GM18951 (cell line): ENCODE measurements at regions of chr1 and their contacts with region 1.

Region 1: GRCh38 chr1:113042285-113043143 is 30.5 kb upstream of the LRIG2 start:
- POLR2A ChIP-seq: no peak

Region 2: GRCh38 chr1:112706908-112707663 is 335.4 kb before region 1 on chr1 and contains the start of gene RHOC:
- in situ Hi-C with region 1: loop called (anchors 25 kb)
- POLR2A ChIP-seq: peak; percentile 77

Region 3: DNA sequence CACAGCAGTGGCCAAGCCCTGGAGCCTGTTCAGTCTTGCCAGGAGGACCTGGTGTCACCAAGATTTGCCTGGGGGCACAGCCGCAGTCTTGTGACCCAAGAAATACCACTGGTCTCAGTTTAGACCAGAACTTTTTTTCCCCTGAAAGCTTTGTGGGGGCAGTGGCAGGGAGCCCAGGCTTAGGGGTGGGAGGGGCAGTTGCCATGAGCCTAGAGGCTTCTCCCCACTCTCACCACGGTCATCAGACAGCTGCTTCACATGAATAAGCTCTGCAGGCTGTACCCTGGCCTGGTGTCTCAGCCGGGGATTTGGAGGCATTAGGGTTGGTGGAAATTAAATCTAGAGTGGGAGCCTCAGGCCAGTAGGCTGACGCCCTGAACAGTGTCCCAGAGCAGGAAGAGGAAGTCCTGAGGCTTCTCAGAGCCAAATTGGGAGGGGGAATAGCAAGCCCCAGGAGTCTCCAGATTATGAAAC is 160.2 kb before region 1 on chr1:
- in situ Hi-C with region 1: loop called (anchors 10 kb)
- POLR2A ChIP-seq: no peak

Region 4: GRCh38 chr1:113133038-113133437 is 90.5 kb after region 1 on chr1:
- in situ Hi-C with region 1: no loop called
- POLR2A ChIP-seq: no peak

Region 5: DNA sequence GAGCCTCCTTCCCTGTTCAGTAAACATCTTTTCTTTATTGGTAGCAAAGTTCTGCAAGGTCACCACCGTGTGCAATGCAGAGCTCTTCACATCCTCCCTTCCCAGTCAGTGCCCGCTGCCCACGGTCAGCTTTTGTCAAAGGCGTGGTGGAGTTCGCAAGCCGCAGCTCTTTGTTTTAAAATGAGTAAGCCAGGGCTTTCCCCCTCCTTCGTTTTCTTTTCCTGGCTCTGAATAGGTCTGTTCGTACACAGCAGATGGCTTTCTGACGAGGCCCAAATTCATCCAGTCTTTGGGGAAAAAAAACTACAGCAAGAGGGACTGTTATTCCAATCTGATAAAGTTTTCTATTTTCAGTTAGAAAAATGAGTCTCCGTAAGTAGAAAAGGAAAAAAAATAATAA is 183.6 kb after region 1 on chr1:
- in situ Hi-C with region 1: no loop called
- POLR2A ChIP-seq: no peak